Sigmoid colon (tissue), 7 donors: ENCODE measurements at regions of chr5 and their contacts with region 1.

Region 1: GRCh38 chr5:168486136-168486879 is at the start of gene RARS1:
- DNase-seq: peak; percentile 95
- H3K4me3 ChIP-seq: peak within 1 kb of the TSS; percentile 74 to 96 (median 81)
- H3K27ac ChIP-seq: peak within 1 kb of the TSS; percentile 79 to 83 (median 82)
- H3K4me1 ChIP-seq: peaks cover 0 to 13% (median 10%) of the 10 kb centered on the region in 4 donors
- H3K27me3 ChIP-seq: no peaks in the 10 kb centered on the region
- CTCF ChIP-seq: peak; percentile 90 to 95 (median 94)
- EP300 ChIP-seq: no peak
- POLR2A ChIP-seq: peak; percentile 84 to 87
- total RNA-seq, gene RARS1: 65.8 to 91.1 (median 85.3) TPM

Region 2: DNA sequence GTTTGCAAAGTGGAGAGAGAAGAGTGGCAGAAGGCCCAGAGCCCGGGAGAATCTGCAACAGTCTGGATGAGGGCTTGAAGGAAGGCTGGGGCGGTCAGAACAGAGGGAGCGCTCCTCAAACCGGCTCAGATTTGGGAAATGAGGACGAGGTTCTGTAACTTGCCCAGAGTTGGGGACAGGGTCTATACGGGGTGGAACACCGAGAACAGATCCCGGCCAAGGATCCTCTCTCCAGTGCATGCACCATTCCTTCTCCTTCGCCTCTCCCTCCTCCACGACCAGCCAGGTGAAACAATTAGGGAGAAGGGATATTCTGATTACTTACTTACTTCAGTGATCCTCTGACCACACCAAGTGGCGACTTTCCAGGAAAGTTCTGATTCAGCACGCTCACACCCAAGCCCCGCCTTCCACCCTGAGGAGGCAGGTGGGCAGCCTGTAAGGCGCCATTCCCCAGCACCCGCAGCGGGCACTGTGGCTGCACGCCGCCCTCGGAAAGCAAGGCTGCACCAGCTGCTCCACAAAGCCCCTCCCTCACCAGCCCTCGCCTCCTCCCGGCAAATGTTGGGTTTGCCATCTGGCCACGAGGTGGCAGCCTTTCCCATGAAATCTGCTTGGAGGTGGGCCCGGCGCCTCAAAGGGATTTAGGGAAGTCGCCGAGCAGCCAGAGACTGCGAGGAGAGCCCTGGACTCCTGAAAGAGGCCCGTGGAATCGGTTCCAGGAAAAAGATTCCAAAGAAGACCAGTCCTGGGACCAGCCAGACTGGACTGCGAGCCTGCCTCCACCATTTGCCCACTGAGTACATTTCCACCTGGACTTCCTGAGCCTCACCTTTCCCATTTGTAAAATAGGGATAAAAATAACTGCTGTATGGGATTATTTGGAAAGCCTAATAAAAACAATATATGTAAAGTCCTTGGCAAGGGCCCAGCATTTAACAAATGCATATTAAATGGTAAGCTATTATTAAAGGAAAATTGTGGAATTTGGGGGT is 217.1 kb before region 1 on chr5:
- intact Hi-C with region 1: loop called (anchors 5 kb)
- DNase-seq: peak; percentile 89
- H3K4me3 ChIP-seq: peak overlapping the region in 3 of 4 donors; percentile 33 to 39 (median 34)
- H3K27ac ChIP-seq: peak overlapping the region in 1 of 4 donors; percentile 4
- H3K4me1 ChIP-seq: peaks cover 0 to 13% (median 12%) of the 10 kb centered on the region in 4 donors
- H3K27me3 ChIP-seq: no peaks in the 10 kb centered on the region
- CTCF ChIP-seq: peak; percentile 62 to 87 (median 79)
- EP300 ChIP-seq: no peak
- POLR2A ChIP-seq: no peak

Region 3: DNA sequence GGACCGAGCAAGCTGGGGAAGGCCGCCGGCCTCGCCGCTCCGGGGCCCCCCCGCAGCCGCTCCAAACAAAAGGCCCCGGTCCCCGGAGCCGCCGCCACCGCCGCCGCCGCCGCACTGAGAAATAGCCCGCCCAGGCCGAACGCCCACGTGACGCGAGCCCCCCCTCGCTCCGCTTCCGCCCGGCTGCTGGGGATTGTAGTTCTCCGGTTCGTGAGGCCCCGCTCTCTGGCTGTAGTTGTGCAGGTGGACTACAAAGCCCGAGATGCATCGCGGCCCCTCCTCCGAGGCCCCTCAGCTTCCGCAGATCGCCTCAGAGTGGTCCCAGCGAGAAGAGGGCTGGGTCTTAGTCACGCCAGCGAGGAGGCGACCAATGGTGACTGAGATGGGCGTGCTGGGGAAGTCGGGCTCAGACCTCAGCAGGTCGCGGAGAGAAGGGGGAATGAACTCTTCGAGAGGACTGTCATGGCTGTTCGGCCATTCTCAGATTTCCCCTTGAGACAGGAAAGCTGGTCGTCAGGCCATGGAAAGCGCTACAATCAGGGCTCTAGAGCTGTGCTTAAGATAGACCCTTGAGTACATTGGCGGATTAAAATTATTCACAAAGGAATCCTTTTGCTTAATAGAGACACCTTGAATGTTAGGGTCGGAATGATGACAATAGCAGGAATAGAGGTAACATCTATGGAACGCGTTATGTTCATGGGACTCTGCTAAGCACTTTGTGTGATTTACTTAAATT is 93.3 kb after region 1 on chr5:
- intact Hi-C with region 1: loop called (anchors 2 kb)
- DNase-seq: peak; percentile 100
- H3K4me3 ChIP-seq: peak overlapping the region; percentile 74 to 94 (median 89)
- H3K27ac ChIP-seq: peak overlapping the region; percentile 95 to 99 (median 97)
- H3K4me1 ChIP-seq: peaks cover 0 to 44% (median 15%) of the 10 kb centered on the region in 4 donors
- H3K27me3 ChIP-seq: no peaks in the 10 kb centered on the region
- CTCF ChIP-seq: no peak
- EP300 ChIP-seq: peak in 1 of 4 donors; percentile 26
- POLR2A ChIP-seq: peak in 1 of 2 donors; percentile 82